Head of caudate nucleus (tissue), 42 donors: ENCODE measurements at regions of chr14 and their contacts with region 1.

Region 1: DNA sequence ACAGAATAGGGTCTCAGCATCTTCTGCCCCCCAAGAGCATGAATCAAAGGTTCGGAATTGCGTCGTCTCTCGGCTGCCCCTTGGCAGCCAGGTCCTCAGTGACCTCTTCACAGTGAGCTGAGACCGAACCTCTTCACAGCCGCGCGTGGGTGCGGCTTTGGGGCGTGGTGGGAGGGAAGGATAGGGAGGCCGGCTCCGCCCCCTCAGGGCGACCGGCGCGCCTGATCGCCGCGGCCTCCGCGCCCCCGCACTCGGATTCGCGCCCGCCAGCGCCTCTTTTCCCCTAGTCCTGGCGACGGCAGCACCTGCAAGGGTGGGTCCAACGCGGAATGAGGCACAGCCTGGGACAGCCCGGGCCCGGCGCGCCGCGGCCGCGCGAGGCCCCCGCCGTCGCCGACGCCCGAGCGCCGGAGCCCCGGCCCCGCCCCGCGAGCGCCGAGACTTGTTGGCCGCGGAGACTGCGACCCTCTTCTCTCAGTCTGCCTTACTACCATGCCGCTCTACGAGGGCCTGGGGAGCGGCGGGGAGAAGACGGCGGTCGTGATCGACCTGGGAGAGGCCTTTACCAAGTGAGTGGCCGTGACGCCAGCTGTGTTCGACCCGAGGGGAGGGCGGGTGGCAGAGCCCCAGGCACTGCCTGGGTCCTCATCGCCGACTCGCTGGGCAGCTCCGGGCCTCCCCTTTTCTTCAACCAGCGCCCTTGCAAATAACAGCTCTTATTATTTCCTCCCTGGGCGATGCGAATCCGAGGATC is at the start of gene ACTR10:
- DNase-seq: peak; percentile 55 to 92 (median 84)

Region 2: GRCh38 chr14:58152014-58152857 is 47.7 kb before region 1 on chr14 and contains the start of gene ARMH4:
- intact Hi-C with region 1: loop called (anchors 5 kb)
- DNase-seq: peak; percentile 67 to 92 (median 86)

Region 3: DNA sequence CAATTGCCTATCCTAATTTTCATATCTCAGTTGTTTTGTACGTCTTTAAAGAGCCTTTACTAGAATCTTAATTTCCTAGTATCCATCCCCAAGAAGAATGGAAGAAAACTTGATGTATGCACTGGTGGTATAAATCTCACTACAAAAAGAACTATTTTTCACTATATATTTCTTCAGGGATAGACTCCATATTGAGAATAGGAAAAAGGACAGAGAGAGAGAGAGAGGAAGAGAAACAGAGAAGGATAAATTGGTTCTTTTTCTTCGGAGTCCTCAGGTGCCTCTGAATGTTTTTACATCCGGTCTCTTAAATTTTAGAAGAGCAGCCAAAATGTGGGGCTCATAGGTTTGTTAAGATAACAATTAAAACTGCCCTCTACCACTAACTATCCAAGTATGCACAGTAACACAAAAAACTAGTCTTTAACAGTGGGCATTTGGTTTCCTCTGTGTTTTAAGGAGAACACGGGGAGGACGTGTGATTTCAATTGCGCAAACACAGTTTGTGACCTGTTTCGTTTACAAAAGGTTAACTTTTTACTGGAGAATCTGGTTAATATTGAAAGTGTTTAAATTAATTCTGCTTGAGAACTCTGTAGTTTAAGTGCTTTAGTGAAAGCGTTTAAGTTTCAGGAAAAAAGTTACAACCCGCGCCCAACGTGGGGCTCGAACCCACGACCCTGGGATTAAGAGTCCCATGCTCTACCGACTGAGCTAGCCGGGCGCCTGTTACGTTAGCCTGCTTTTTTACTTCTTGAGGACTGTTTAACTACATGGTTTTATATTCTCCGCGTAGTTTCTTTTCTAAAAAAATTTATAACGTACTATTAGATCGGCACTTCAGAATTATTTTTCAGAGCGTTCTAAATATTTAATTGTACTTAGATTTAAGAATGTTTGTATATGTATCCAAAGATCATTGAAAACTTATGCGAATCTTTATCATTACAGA is 39.6 kb after region 1 on chr14:
- intact Hi-C with region 1: loop called (anchors 5 kb)
- DNase-seq: peak; percentile 54 to 94 (median 79)